Right cardiac atrium (tissue), 5 donors: ENCODE measurements at regions of chr20 and their contacts with region 1.

Region 1: GRCh38 chr20:16236589-16237241 is 336.5 kb downstream of the KIF16B start:
- DNase-seq: no peak
- ATAC-seq: no peak
- H3K4me3 ChIP-seq: no peak overlapping the region
- H3K27ac ChIP-seq: no peak overlapping the region
- H3K4me1 ChIP-seq: no peaks in the 10 kb centered on the region
- H3K27me3 ChIP-seq: no peaks in the 10 kb centered on the region

Region 2: GRCh38 chr20:16175322-16175957 is 61.3 kb before region 1 on chr20:
- intact Hi-C with region 1: loop called in 1 of 4 experiments (anchors 10 kb)
- DNase-seq: no peak
- ATAC-seq: no peak
- H3K4me3 ChIP-seq: no peak overlapping the region
- H3K27ac ChIP-seq: no peak overlapping the region
- H3K4me1 ChIP-seq: no peaks in the 10 kb centered on the region
- H3K27me3 ChIP-seq: no peaks in the 10 kb centered on the region